GM12878 (cell line): ENCODE measurements at regions of chr6 and their contacts with region 1.

Region 1: GRCh38 chr6:24494821-24495795 is at the start of gene ALDH5A1:
- DNase-seq: no peak
- ATAC-seq: peak; percentile 86
- H3K4me3 ChIP-seq: peak within 1 kb of the TSS; percentile 79
- H3K27ac ChIP-seq: peak within 1 kb of the TSS; percentile 33
- H3K4me1 ChIP-seq: peaks cover 3% of the 10 kb centered on the region; the same call in 1 of the 2 replicates
- H3K27me3 ChIP-seq: no peaks in the 10 kb centered on the region
- CTCF ChIP-seq: peak; percentile 30 to 57 (median 34); a peak in 5 of 6 replicates
- EP300 ChIP-seq: no peak
- POLR2A ChIP-seq: peak; percentile 71
- RAD21 ChIP-seq: peak; percentile 66
- polyA plus RNA-seq, gene ALDH5A1: 2.6 to 6.9 TPM

Region 2: GRCh38 chr6:24513602-24514001 is 18.5 kb after region 1 on chr6:
- CTCF ChIA-PET with region 1: interaction called, 233 read pairs
- POLR2A ChIA-PET with region 1: interaction called, 11 read pairs
- RAD21 ChIA-PET with region 1: interaction called, 37 read pairs
- SMC1A ChIA-PET with region 1: interaction called, 17 read pairs
- in situ Hi-C with region 1: no loop called
- intact Hi-C with region 1: no loop called
- DNase-seq: no peak
- ATAC-seq: no peak
- H3K4me3 ChIP-seq: no peak overlapping the region
- H3K27ac ChIP-seq: no peak overlapping the region
- H3K4me1 ChIP-seq: peaks cover 10% of the 10 kb centered on the region
- H3K27me3 ChIP-seq: no peaks in the 10 kb centered on the region
- CTCF ChIP-seq: peak; percentile 6 to 22 (median 10); a peak in 4 of 6 replicates
- EP300 ChIP-seq: no peak
- POLR2A ChIP-seq: no peak
- RAD21 ChIP-seq: 0 out of 2 replicates have a peak, but pooled peaks have one; percentile 19

Region 3: DNA sequence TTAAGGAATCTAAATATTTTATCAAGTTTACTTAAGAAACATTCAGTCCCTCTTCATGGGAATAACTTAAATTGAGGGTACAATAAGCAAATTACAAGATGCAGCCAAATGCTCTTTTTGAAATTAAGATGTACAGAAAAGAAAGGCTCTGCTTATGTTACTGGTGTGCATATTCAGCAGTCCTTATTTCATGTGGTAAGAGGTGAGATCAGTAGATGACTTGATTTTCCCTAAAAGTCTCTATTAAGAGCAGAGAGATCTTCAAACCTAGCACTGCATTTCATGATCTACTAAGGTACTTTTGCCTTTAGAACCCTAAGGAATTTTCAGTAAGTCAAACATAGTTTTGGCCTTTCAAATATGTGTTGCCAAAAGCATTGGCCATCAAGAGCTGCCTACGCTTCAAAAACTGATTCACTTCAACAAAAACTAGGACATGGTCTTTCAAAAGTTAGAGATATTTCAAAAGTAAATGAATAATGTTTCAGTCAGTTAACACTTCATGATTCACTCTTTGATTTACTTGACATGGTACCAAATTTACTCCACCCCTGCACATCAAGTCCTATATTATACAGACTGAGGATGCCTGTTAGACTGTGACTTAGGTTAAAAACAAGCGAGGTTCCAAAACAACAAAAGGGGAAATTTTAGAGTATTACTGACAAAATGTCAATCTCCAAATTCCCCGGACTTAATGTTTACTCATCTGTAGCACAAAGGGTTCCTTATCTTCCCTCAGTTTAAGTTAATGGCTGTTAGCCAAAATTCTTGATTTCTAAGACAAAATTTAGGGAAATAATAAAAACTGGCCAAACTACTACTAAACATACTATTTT is 204.6 kb after region 1 on chr6:
- CTCF ChIA-PET with region 1: interaction called, 10 read pairs
- POLR2A ChIA-PET with region 1: no interaction called
- RAD21 ChIA-PET with region 1: no interaction called
- SMC1A ChIA-PET with region 1: interaction called, 3 read pairs
- in situ Hi-C with region 1: no loop called
- intact Hi-C with region 1: no loop called
- DNase-seq: no peak
- ATAC-seq: no peak
- H3K4me3 ChIP-seq: no peak overlapping the region
- H3K27ac ChIP-seq: no peak overlapping the region
- H3K4me1 ChIP-seq: no peaks in the 10 kb centered on the region
- H3K27me3 ChIP-seq: no peaks in the 10 kb centered on the region
- CTCF ChIP-seq: no peak
- EP300 ChIP-seq: no peak
- POLR2A ChIP-seq: no peak
- RAD21 ChIP-seq: no peak